Colonic mucosa (tissue), 4 donors: ENCODE measurements at regions of chr7 and their contacts with region 1.

Region 1: GRCh38 chr7:156156734-156157610 is 344.7 kb upstream of the SHH start:
- DNase-seq: no peak
- H3K4me3 ChIP-seq: no peak overlapping the region
- H3K27ac ChIP-seq: no peak overlapping the region
- H3K4me1 ChIP-seq: no peaks in the 10 kb centered on the region
- H3K27me3 ChIP-seq: no peaks in the 10 kb centered on the region
- CTCF ChIP-seq: no peak

Region 2: GRCh38 chr7:155815332-155816191 is 341.4 kb before region 1 on chr7:
- intact Hi-C with region 1: loop called (anchors 5 kb)
- DNase-seq: peak; percentile 82
- H3K4me3 ChIP-seq: no peak overlapping the region
- H3K27ac ChIP-seq: no peak overlapping the region
- H3K4me1 ChIP-seq: no peaks in the 10 kb centered on the region
- H3K27me3 ChIP-seq: peaks cover 29% of the 10 kb centered on the region
- CTCF ChIP-seq: peak; percentile 70

Region 3: DNA sequence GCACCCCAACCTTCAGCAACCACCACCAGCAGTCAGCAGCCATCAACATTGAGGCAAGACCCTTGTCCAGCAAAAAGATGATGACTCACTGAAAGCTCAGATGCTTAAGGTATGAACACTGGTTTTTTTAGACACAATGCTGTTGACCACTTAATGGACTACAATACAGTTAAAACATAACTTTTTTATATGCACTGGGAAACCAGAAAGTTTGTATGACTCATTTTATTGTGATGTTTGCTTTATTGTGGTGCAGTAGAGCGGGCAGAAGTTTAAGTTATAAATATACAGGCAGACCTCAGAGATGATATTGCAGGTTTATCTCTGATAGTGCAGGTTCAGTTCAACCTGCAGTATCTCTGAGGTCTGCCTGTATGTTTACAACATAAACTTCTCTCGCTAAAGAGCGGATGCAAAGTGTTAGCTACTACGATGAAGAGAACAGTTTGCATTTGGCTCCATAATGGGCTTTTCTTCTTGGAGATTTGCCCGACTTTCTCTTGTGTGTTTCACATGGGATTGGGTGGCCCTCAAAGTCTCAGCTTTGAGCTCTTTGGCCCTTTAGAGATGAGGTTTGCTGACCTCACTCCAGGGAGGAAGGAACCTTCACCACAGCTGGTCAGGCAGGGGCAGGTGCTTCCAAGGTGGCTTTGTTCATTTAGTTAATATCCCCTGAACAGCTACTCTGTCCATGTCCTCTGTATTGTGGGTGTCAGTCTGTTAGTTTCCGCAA is 260.3 kb before region 1 on chr7:
- intact Hi-C with region 1: no loop called
- DNase-seq: no peak
- H3K4me3 ChIP-seq: no peak overlapping the region
- H3K27ac ChIP-seq: no peak overlapping the region
- H3K4me1 ChIP-seq: no peaks in the 10 kb centered on the region
- H3K27me3 ChIP-seq: no peaks in the 10 kb centered on the region
- CTCF ChIP-seq: no peak